Heart left ventricle (tissue), 16 donors: ENCODE measurements at regions of chr7 and their contacts with region 1.

Region 1: GRCh38 chr7:99289185-99289584 is 16.5 kb downstream of the MYH16 start:
- DNase-seq: no peak
- ATAC-seq: no peak
- H3K4me3 ChIP-seq: no peak overlapping the region
- H3K27ac ChIP-seq: no peak overlapping the region
- H3K4me1 ChIP-seq: no peaks in the 10 kb centered on the region
- H3K27me3 ChIP-seq: no peaks in the 10 kb centered on the region
- CTCF ChIP-seq: no peak
- POLR2A ChIP-seq: no peak

Region 2: GRCh38 chr7:99219985-99220384 is 69.2 kb before region 1 on chr7:
- intact Hi-C with region 1: loop called in 1 of 10 experiments (anchors 10 kb)
- DNase-seq: no peak
- ATAC-seq: no peak
- H3K4me3 ChIP-seq: no peak overlapping the region
- H3K27ac ChIP-seq: no peak overlapping the region
- H3K4me1 ChIP-seq: no peaks in the 10 kb centered on the region
- H3K27me3 ChIP-seq: no peaks in the 10 kb centered on the region
- CTCF ChIP-seq: no peak
- POLR2A ChIP-seq: no peak

Region 3: DNA sequence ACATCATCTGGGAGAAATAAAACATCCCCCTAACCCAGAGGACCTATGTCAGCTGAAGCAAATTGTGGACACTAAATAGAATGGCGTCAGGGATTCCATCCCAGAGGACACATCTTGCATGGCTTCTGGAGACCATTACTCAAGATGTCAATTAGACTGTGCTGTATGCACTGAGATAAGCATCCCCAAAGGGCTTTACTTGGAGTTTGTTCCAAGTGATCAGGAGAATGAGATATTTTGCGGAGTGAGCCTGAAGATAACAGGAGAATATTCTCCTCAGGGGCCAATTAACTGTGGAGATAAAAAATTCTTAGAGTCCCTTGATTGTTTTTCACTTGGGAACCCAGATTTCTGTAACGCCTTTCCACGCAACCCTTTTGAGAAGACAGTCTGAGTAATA is 592.2 kb after region 1 on chr7:
- intact Hi-C with region 1: loop called in 1 of 10 experiments (anchors 10 kb)
- DNase-seq: no peak
- ATAC-seq: no peak
- H3K4me3 ChIP-seq: no peak overlapping the region
- H3K27ac ChIP-seq: no peak overlapping the region
- H3K4me1 ChIP-seq: no peaks in the 10 kb centered on the region
- H3K27me3 ChIP-seq: no peaks in the 10 kb centered on the region
- CTCF ChIP-seq: no peak
- POLR2A ChIP-seq: no peak